ENCODE measurements at regions of chr3 and their contacts with region 1.

Region 1: DNA sequence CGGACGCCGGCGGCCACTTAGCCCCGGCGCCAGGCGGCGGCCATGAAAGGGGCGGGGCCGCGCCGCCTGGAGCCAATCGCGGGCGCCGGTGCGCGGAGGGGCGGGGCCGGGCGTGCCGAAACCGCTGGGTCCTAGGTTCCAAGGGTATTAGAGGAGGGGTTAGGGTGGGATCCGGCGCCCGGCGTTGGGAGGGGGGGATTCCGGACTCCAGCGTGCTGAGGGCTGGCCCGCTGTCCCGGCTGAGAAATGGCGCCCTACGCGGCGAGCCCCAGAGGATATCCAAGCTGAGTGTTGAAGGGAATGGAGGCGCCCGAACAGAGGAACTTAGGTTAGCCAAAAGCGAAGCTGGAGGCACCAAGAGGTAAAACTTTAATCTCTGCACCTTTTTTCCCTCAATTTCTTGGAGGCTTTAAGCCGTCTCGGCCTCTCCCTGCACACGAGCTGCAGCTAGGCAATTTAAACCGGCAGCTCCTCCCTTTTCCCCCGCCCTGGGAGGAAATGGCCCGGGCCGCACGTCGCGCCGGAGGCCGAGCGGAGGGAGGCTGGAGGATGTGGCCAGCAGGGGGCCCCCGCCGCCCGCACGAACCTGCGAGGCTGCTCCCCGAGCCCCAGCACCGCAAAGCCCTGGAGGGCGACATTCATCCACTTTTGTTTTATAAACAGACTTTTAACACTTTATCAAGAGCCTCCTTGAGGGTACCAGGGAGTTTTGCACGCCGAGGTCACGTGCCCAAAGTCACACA is at the start of gene XXYLT1:
- H3K4me3 ChIP-seq: peak within 1 kb of the TSS; percentile 81
- H3K27ac ChIP-seq: peak within 1 kb of the TSS; percentile 61
- H3K4me1 ChIP-seq: no peaks in the 10 kb centered on the region
- CTCF ChIP-seq: peak; percentile 94

Region 2: GRCh38 chr3:194671900-194672808 is 599.1 kb before region 1 on chr3 and contains the start of gene LSG1:
- CTCF ChIA-PET with region 1: interaction called, 10 read pairs
- POLR2A ChIA-PET with region 1: interaction called, 4 read pairs
- H3K4me3 ChIP-seq: peak within 1 kb of the TSS; percentile 86
- H3K27ac ChIP-seq: peak within 1 kb of the TSS; percentile 53
- H3K4me1 ChIP-seq: no peaks in the 10 kb centered on the region
- CTCF ChIP-seq: no peak

Region 3: GRCh38 chr3:194879991-194880939 is 391.0 kb before region 1 on chr3:
- CTCF ChIA-PET with region 1: no interaction called
- POLR2A ChIA-PET with region 1: no interaction called
- H3K4me3 ChIP-seq: no peak overlapping the region
- H3K27ac ChIP-seq: no peak overlapping the region
- H3K4me1 ChIP-seq: no peaks in the 10 kb centered on the region
- CTCF ChIP-seq: no peak

Region 4: GRCh38 chr3:195207731-195208585 is 63.3 kb before region 1 on chr3:
- CTCF ChIA-PET with region 1: no interaction called
- POLR2A ChIA-PET with region 1: no interaction called
- H3K4me3 ChIP-seq: no peak overlapping the region
- H3K27ac ChIP-seq: no peak overlapping the region
- H3K4me1 ChIP-seq: peaks cover 4% of the 10 kb centered on the region; the same call in 1 of the 2 replicates
- CTCF ChIP-seq: no peak

Region 5: DNA sequence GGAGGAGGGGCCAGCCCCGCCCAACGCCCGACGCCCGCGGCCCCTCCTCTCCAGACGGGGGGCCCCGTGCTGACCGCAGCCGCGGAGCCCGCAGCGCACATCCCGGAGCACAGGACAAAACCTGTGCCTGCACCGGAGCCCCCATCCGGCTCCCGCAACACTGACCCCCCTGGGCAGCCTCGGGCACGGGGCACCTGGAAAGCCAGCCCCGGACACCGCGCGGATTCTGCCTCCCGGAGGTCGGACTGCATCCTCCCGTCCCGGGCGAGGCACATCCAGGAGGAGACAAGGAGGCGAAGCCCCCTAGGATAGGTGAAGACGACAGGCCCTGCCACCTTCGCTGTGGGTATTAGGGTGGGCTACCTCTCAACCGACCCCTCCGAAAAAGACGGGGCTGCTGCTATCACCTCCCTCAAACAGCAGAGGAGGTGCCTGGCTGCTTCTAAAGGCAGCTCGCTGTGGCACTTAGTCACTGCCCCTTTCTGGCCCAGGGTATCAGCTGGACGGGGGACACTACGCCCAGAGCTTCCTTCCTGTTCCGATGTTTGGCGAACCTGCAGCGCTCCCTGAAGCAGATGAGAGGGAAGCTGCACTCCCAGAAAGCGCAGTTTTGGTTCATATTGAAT is 10.9 kb before region 1 on chr3:
- CTCF ChIA-PET with region 1: interaction called, 15 read pairs
- POLR2A ChIA-PET with region 1: interaction called, 4 read pairs
- H3K4me3 ChIP-seq: peak overlapping the region; percentile 58
- H3K27ac ChIP-seq: no peak overlapping the region
- H3K4me1 ChIP-seq: peaks cover 7% of the 10 kb centered on the region
- CTCF ChIP-seq: no peak

Region 6: GRCh38 chr3:195442573-195443390 is 171.5 kb after region 1 on chr3 and contains the start of gene ACAP2:
- CTCF ChIA-PET with region 1: interaction called, 23 read pairs
- POLR2A ChIA-PET with region 1: interaction called, 5 read pairs
- H3K4me3 ChIP-seq: peak within 1 kb of the TSS; percentile 92
- H3K27ac ChIP-seq: peak within 1 kb of the TSS; percentile 90
- H3K4me1 ChIP-seq: peaks cover 5% of the 10 kb centered on the region; the same call in 1 of the 2 replicates
- CTCF ChIP-seq: no peak

Region 7: GRCh38 chr3:195517030-195517429 is 245.7 kb after region 1 on chr3:
- CTCF ChIA-PET with region 1: interaction called, 92 read pairs
- POLR2A ChIA-PET with region 1: no interaction called
- H3K4me3 ChIP-seq: no peak overlapping the region
- H3K27ac ChIP-seq: no peak overlapping the region
- H3K4me1 ChIP-seq: no peaks in the 10 kb centered on the region
- CTCF ChIP-seq: no peak

Region 8: DNA sequence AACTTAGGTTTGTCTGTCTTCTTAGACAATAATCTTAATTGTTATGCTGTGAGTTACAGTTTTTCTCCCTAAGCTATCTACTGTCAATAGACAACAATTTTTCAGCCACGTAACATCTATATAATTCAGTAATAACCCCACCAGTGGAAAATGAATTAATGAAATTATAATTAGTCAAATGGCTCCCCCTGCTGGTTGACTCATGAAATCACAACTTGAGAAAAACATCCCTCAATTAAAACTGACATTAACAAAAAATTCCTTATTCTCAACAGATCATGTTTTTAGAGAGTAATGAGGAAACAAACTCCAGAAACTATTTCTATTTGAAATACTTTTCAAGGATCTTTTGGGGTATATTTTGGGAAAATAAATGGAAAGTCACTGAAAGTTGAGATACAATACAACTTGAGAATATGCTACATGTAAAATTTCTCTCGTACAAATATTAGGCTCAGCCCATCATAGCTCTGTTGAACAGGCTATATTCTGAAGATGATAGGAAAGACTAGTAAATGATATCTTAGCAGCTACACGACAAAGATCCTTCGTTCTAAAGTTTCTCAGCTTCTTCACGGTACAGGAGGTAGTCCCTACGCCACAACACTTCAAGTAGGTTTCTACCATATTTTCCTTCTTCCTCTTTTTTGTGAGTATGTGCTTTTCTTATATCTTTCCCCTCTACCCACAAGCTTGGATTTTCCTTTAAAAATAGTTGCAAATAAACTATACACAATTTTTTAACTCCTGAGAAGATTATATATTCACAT is 251.2 kb after region 1 on chr3:
- CTCF ChIA-PET with region 1: interaction called, 92 read pairs
- POLR2A ChIA-PET with region 1: interaction called, 4 read pairs
- H3K4me3 ChIP-seq: no peak overlapping the region
- H3K27ac ChIP-seq: no peak overlapping the region
- H3K4me1 ChIP-seq: no peaks in the 10 kb centered on the region
- CTCF ChIP-seq: no peak

Region 9: GRCh38 chr3:195542698-195543499 is 271.6 kb after region 1 on chr3 and contains the start of gene PPP1R2:
- CTCF ChIA-PET with region 1: interaction called, 10 read pairs
- POLR2A ChIA-PET with region 1: interaction called, 11 read pairs
- H3K4me3 ChIP-seq: peak within 1 kb of the TSS; percentile 92
- H3K27ac ChIP-seq: peak within 1 kb of the TSS; percentile 66
- H3K4me1 ChIP-seq: peaks cover 4% of the 10 kb centered on the region
- CTCF ChIP-seq: no peak

Measured in HEK293 (cell line).